Mammary epithelial cell (primary cell): ENCODE measurements at regions of chr17 and their contacts with region 1.

Region 1: GRCh38 chr17:6567529-6568183 is 11.3 kb upstream of the PITPNM3 start:
- DNase-seq: peak; percentile 91
- H3K4me3 ChIP-seq: peak overlapping the region in 2 of 3 experiments; percentile 27 to 43
- H3K27ac ChIP-seq: peak overlapping the region; percentile 62
- H3K4me1 ChIP-seq: peaks cover 16% of the 10 kb centered on the region
- H3K27me3 ChIP-seq: no peaks in the 10 kb centered on the region
- CTCF ChIP-seq: peak in 1 of 2 donors; percentile 46

Region 2: DNA sequence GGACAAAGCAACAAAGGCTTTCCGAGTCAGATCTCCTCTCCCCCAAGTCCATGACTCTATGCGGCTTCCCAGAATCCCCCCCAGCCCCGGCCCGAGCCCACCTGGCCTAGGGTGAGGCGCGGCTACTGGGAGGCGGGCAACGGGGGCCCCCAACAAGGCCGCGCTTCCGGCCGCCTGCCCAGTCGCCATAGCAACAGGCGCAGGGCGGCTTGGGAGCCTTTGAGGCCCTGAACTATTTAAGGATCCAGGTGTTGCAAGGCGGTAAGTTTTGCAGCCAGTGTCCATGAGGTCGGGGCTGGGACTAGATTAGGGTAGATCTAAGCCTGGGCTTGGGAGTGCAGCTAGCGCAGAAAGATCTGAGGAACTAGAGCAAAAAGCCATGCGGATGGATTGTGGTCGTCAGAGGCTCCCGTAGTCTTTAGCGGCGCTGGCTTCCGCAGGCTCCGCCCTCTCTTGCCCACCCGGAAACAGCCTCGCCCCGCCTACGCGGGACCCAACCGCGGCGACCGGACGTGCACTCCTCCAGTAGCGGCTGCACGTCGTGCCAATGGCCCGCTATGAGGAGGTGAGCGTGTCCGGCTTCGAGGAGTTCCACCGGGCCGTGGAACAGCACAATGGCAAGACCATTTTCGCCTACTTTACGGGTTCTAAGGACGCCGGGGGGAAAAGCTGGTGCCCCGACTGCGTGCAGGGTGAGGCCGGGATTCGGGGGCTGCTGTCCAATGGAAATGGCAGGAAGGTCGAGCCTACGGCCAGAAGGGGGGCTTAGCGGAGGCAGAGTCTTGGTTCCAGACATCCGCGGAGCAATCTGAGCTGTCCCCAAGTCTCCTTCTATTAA is 73.1 kb after region 1 on chr17 and contains the starts of genes KIAA0753 and TXNDC17:
- CTCF ChIA-PET with region 1: no interaction called
- dilution Hi-C with region 1: no loop called
- in situ Hi-C with region 1: no loop called
- intact Hi-C with region 1: loop called (anchors 1 kb)
- DNase-seq: peak; percentile 89
- H3K4me3 ChIP-seq: peak within 1 kb of the TSS; percentile 66 to 97 (median 79)
- H3K27ac ChIP-seq: peak within 1 kb of the TSS; percentile 87
- H3K4me1 ChIP-seq: peaks cover 43% of the 10 kb centered on the region
- H3K27me3 ChIP-seq: no peaks in the 10 kb centered on the region
- CTCF ChIP-seq: no peak
- total RNA-seq, gene KIAA0753: 23.2 to 25.2 TPM
- total RNA-seq, gene TXNDC17: 315 to 319 TPM